Astrocyte of the cerebellum (primary cell): ENCODE measurements at regions of chr13 and their contacts with region 1.

Region 1: GRCh38 chr13:98821372-98822224 is 69.1 kb upstream of the SLC15A1 start:
- DNase-seq: peak; percentile 41
- H3K4me3 ChIP-seq: no peak overlapping the region
- CTCF ChIP-seq: no peak

Region 2: GRCh38 chr13:98717256-98717655 is 104.3 kb before region 1 on chr13:
- in situ Hi-C with region 1: loop called (anchors 5 kb)
- DNase-seq: no peak
- H3K4me3 ChIP-seq: no peak overlapping the region
- CTCF ChIP-seq: no peak

Region 3: DNA sequence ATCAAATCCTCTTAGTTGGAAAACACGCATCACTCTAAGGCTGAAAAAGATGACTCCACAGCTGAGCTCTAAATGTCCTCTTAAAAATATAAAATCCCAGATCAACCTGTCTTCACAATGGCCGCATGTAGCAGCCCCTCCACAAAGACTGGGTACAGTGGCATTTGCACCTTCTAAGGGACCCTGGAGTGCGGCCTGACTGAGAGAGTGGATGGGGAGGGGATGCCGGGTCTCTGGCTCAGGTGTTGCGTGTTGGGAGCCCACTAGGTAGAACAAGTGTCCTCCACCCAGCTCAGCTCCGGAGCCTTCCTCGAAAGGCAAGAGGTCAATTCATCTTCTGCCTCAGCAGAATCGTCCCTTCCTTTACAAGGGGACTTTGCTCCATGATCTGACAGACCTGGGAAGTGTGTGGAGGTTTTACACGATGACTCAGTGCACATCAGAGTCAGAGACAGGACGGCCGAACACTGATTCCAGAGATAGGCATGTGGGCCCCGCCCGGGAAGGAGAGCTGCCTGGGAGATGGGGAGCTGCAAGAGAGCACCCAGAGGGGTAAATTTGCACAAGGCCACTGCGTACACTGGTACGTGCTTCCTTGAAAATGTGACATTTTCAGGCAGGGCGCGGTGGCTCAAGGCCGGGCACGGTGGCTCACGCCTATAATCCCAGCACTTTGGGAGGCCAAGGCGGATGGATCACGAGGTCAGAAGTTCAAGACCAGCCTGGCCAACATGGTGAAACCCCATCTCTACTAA is 45.6 kb before region 1 on chr13:
- in situ Hi-C with region 1: no loop called
- DNase-seq: no peak
- H3K4me3 ChIP-seq: no peak overlapping the region
- CTCF ChIP-seq: no peak

Region 4: DNA sequence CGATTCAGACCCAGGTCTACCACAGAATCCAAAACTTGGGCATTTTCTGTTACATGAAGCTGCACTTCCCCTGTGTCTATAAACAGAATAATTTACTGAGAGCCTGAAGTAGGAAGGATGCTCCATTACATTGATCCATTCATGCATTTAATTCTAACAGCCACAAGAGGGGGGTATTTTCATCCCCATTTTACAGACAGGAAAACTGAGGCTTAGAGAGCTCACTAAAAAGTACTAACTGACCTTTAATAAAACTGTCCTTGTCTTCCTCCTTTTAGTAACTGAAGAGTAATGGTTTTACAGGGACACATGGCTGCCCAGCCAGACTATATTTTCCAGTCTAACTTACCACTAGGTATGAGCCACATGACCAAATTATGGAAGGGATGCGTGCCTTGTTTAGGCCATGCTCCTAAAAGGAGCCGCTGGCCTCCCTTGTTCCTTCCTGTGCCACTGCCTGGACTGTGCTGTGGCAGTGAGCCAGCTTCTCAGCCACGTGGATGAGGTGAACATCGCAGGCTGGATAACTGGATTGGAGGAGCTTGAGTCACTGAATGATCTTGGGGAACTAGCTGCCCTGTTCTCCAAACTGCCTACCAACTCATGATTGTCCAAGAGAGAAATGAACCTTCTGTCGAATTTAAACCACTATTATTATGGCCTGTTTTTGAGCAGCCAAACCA is 48.0 kb after region 1 on chr13:
- in situ Hi-C with region 1: loop called (anchors 5 kb)
- DNase-seq: no peak
- H3K4me3 ChIP-seq: no peak overlapping the region
- CTCF ChIP-seq: no peak